ENCODE measurements at regions of chr10 and their contacts with region 1.

Region 1: DNA sequence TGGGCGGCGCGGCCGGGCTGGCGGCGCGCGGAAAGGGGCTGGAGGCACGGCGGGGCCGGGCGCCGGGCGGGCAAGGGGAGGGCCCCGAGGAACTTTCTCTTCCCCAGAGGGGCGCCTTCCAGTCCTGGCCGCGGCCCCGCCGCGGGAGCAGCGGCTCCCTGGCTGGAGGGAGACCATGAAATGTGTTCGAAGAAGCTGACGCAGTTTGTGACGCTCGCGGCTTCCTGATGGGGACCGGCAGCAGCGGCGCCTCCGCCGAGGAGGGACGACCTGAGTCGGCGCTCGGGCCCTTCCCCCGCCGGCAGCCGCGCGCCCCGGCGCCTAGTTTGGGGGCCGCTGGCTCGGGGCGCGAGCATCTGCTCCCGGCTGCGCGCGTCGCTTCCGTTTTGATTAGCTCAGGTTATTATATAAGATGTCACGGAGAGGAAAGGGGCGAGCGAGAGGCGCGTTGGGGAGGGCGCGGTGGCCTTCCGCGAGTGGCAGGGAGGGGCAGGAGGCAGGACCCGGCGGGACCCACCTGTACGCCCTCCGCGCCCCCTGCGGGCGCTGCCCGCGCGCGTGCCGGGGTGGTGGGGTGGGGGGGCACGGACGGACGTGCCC is 57.1 kb upstream of the PCGF5 start:
- DNase-seq: peak; percentile 72 to 92 (median 88)
- ATAC-seq: peak; percentile 75
- H3K4me3 ChIP-seq: peak overlapping the region; percentile 74
- H3K4me3 Mint-ChIP-seq: peak overlapping the region; percentile 88 to 95 (median 93)
- H3K27ac ChIP-seq: peak overlapping the region; percentile 96
- H3K27ac Mint-ChIP-seq: peak overlapping the region; percentile 88 to 98 (median 95)
- H3K4me1 ChIP-seq: peaks cover 8 to 20% of the 10 kb centered on the region in 2 donors
- H3K4me1 Mint-ChIP-seq: peaks cover 27 to 61% (median 51%) of the 10 kb centered on the region in 7 donors
- H3K27me3 ChIP-seq: no peaks in the 10 kb centered on the region
- H3K27me3 Mint-ChIP-seq: peaks cover 0 to 19% (median 0%) of the 10 kb centered on the region in 5 donors

Region 2: GRCh38 chr10:91034494-91035159 is 128.7 kb before region 1 on chr10:
- CTCF ChIA-PET with region 1: no interaction called
- POLR2A ChIA-PET with region 1: interaction called, 6 read pairs
- intact Hi-C with region 1: loop called in 1 of 2 experiments (anchors 10 kb)
- DNase-seq: no peak
- ATAC-seq: no peak
- H3K4me3 ChIP-seq: no peak overlapping the region
- H3K4me3 Mint-ChIP-seq: peak overlapping the region in 9 of 10 donors; percentile 43 to 88 (median 64)
- H3K27ac ChIP-seq: peak overlapping the region; percentile 57
- H3K27ac Mint-ChIP-seq: peak overlapping the region; percentile 86 to 97 (median 89)
- H3K4me1 ChIP-seq: peaks cover 14 to 17% of the 10 kb centered on the region in 2 donors
- H3K4me1 Mint-ChIP-seq: peaks cover 14 to 33% (median 30%) of the 10 kb centered on the region in 7 donors
- H3K27me3 ChIP-seq: no peaks in the 10 kb centered on the region
- H3K27me3 Mint-ChIP-seq: peaks cover 0 to 19% (median 0%) of the 10 kb centered on the region in 5 donors

Region 3: GRCh38 chr10:91117505-91117904 is 45.9 kb before region 1 on chr10:
- CTCF ChIA-PET with region 1: no interaction called
- POLR2A ChIA-PET with region 1: no interaction called
- intact Hi-C with region 1: no loop called
- DNase-seq: no peak
- ATAC-seq: no peak
- H3K4me3 ChIP-seq: no peak overlapping the region
- H3K4me3 Mint-ChIP-seq: no peak overlapping the region
- H3K27ac ChIP-seq: no peak overlapping the region
- H3K27ac Mint-ChIP-seq: no peak overlapping the region
- H3K4me1 ChIP-seq: no peaks in the 10 kb centered on the region
- H3K4me1 Mint-ChIP-seq: peaks cover 0 to 2% (median 0%) of the 10 kb centered on the region in 7 donors
- H3K27me3 ChIP-seq: no peaks in the 10 kb centered on the region
- H3K27me3 Mint-ChIP-seq: peaks cover 0 to 4% (median 1%) of the 10 kb centered on the region in 5 donors

Region 4: DNA sequence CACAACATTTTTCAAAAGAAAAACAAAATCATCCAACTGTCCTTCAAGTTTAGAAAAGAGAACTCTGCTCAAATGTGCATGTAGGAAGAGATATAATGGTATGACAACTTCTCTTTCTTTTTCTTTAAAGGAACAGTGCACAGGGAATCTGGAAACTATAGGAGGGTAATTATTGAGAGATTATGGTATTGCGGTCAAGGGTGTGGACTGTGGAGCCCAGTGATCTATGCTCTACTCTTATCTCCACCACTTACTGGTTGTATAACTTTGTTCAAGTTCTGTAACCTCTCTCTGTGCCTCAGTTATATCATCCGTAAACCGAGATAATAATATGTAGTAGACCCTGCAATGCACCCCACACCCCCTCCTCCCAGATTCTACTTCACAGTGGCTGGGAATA is 12.7 kb before region 1 on chr10:
- CTCF ChIA-PET with region 1: no interaction called
- POLR2A ChIA-PET with region 1: interaction called, 10 read pairs
- intact Hi-C with region 1: no loop called
- DNase-seq: no peak
- ATAC-seq: no peak
- H3K4me3 ChIP-seq: no peak overlapping the region
- H3K4me3 Mint-ChIP-seq: no peak overlapping the region
- H3K27ac ChIP-seq: no peak overlapping the region
- H3K27ac Mint-ChIP-seq: no peak overlapping the region
- H3K4me1 ChIP-seq: no peaks in the 10 kb centered on the region
- H3K4me1 Mint-ChIP-seq: peaks cover 0 to 1% (median 0%) of the 10 kb centered on the region in 7 donors
- H3K27me3 ChIP-seq: no peaks in the 10 kb centered on the region
- H3K27me3 Mint-ChIP-seq: peaks cover 0 to 28% (median 11%) of the 10 kb centered on the region in 5 donors

Region 5: DNA sequence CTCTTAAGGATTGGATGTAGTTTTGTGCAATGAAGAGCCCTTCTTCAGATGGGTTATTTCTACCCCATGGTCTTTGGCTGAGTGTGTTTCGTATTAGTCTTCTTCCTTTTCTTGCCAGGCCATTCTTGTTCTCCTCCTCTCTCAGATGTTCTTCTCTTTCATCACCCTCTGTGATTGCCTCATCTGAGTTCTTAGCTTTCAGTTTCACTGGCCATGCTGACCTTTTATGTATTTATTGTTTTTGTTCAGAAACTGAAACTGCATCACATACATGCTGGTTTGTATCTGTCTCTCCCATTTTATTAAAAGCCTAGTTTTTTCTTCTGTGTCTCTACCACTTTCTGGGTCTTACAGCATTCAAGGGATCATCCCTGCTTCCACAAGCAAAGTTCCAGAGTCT is 35.4 kb after region 1 on chr10:
- CTCF ChIA-PET with region 1: no interaction called
- POLR2A ChIA-PET with region 1: interaction called, 16 read pairs
- intact Hi-C with region 1: loop called (anchors 1 kb)
- DNase-seq: peak in 5 of 9 donors; percentile 21 to 45 (median 28)
- ATAC-seq: peak; percentile 55
- H3K4me3 ChIP-seq: no peak overlapping the region
- H3K4me3 Mint-ChIP-seq: peak overlapping the region in 8 of 10 donors; percentile 9 to 82 (median 54)
- H3K27ac ChIP-seq: peak overlapping the region; percentile 59
- H3K27ac Mint-ChIP-seq: peak overlapping the region; percentile 44 to 94 (median 86)
- H3K4me1 ChIP-seq: peaks cover 55 to 57% of the 10 kb centered on the region in 2 donors
- H3K4me1 Mint-ChIP-seq: peaks cover 55 to 91% (median 86%) of the 10 kb centered on the region in 7 donors
- H3K27me3 ChIP-seq: no peaks in the 10 kb centered on the region
- H3K27me3 Mint-ChIP-seq: no peaks in the 10 kb centered on the region

Region 6: GRCh38 chr10:91251430-91252056 is 88.2 kb after region 1 on chr10:
- CTCF ChIA-PET with region 1: interaction called, 8 read pairs
- POLR2A ChIA-PET with region 1: interaction called, 6 read pairs
- intact Hi-C with region 1: loop called in 1 of 2 experiments (anchors 1 kb)
- DNase-seq: peak; percentile 16 to 72 (median 64)
- ATAC-seq: peak; percentile 89
- H3K4me3 ChIP-seq: no peak overlapping the region
- H3K4me3 Mint-ChIP-seq: no peak overlapping the region
- H3K27ac ChIP-seq: no peak overlapping the region
- H3K27ac Mint-ChIP-seq: no peak overlapping the region
- H3K4me1 ChIP-seq: peaks cover under 1 to 13% of the 10 kb centered on the region in 2 donors
- H3K4me1 Mint-ChIP-seq: peaks cover 5 to 15% (median 9%) of the 10 kb centered on the region in 7 donors
- H3K27me3 ChIP-seq: no peaks in the 10 kb centered on the region
- H3K27me3 Mint-ChIP-seq: no peaks in the 10 kb centered on the region

Region 7: GRCh38 chr10:91923371-91924211 is 760.2 kb after region 1 on chr10 and contains the start of gene BTAF1:
- CTCF ChIA-PET with region 1: no interaction called
- POLR2A ChIA-PET with region 1: interaction called, 4 read pairs
- intact Hi-C with region 1: loop called in 1 of 2 experiments (anchors 5 kb)
- DNase-seq: peak; percentile 86 to 93 (median 91)
- ATAC-seq: peak; percentile 97
- H3K4me3 ChIP-seq: peak within 1 kb of the TSS; percentile 70
- H3K4me3 Mint-ChIP-seq: peak within 1 kb of the TSS; percentile 91 to 100 (median 96)
- H3K27ac ChIP-seq: peak within 1 kb of the TSS; percentile 96
- H3K27ac Mint-ChIP-seq: peak within 1 kb of the TSS; percentile 97 to 99 (median 98)
- H3K4me1 ChIP-seq: peaks cover 9 to 25% of the 10 kb centered on the region in 2 donors
- H3K4me1 Mint-ChIP-seq: peaks cover 22 to 62% (median 45%) of the 10 kb centered on the region in 7 donors
- H3K27me3 ChIP-seq: no peaks in the 10 kb centered on the region
- H3K27me3 Mint-ChIP-seq: peaks cover under 1 to 8% (median 5%) of the 10 kb centered on the region in 5 donors
- total RNA-seq, gene BTAF1: 55.7 to 84.8 (median 78.5) TPM

Measured in naive thymus-derived CD4-positive, alpha-beta T cell (primary cell).